CD8-positive, alpha-beta T cell (primary cell): ENCODE measurements at regions of chr2 and their contacts with region 1.

Region 1: GRCh38 chr2:230347659-230348305 is 20.8 kb downstream of the SP140L start:
- DNase-seq: peak in 2 of 9 experiments; percentile 21 to 42
- ATAC-seq: no peak
- H3K4me3 ChIP-seq: no peak overlapping the region
- H3K4me3 Mint-ChIP-seq: peak overlapping the region; percentile 42
- H3K27ac ChIP-seq: peak overlapping the region in 1 of 2 experiments; percentile 51
- H3K27ac Mint-ChIP-seq: peak overlapping the region; percentile 58
- H3K4me1 ChIP-seq: peaks cover 28% of the 10 kb centered on the region
- H3K4me1 Mint-ChIP-seq: peaks cover 77% of the 10 kb centered on the region
- H3K27me3 ChIP-seq: no peaks in the 10 kb centered on the region
- H3K27me3 Mint-ChIP-seq: no peaks in the 10 kb centered on the region
- CTCF ChIP-seq: no peak

Region 2: GRCh38 chr2:230335451-230335863 is 12.3 kb before region 1 on chr2:
- CTCF ChIA-PET with region 1: no interaction called
- POLR2A ChIA-PET with region 1: no interaction called
- intact Hi-C with region 1: loop called in 1 of 2 experiments (anchors 2 kb)
- DNase-seq: no peak
- ATAC-seq: no peak
- H3K4me3 ChIP-seq: peak overlapping the region in 1 of 2 experiments; percentile 41
- H3K4me3 Mint-ChIP-seq: peak overlapping the region; percentile 51
- H3K27ac ChIP-seq: peak overlapping the region; percentile 7 to 46
- H3K27ac Mint-ChIP-seq: peak overlapping the region; percentile 84
- H3K4me1 ChIP-seq: peaks cover 37% of the 10 kb centered on the region
- H3K4me1 Mint-ChIP-seq: peaks cover 64% of the 10 kb centered on the region
- H3K27me3 ChIP-seq: no peaks in the 10 kb centered on the region
- H3K27me3 Mint-ChIP-seq: no peaks in the 10 kb centered on the region
- CTCF ChIP-seq: no peak

Region 3: GRCh38 chr2:230589497-230590015 is 241.8 kb after region 1 on chr2:
- CTCF ChIA-PET with region 1: no interaction called
- POLR2A ChIA-PET with region 1: no interaction called
- intact Hi-C with region 1: no loop called
- DNase-seq: peak in 2 of 9 experiments; percentile 31 to 36
- ATAC-seq: peak; percentile 62
- H3K4me3 ChIP-seq: no peak overlapping the region
- H3K4me3 Mint-ChIP-seq: peak overlapping the region; percentile 12
- H3K27ac ChIP-seq: no peak overlapping the region
- H3K27ac Mint-ChIP-seq: peak overlapping the region; percentile 84
- H3K4me1 ChIP-seq: peaks cover 30% of the 10 kb centered on the region
- H3K4me1 Mint-ChIP-seq: peaks cover 43% of the 10 kb centered on the region
- H3K27me3 ChIP-seq: no peaks in the 10 kb centered on the region
- H3K27me3 Mint-ChIP-seq: no peaks in the 10 kb centered on the region
- CTCF ChIP-seq: no peak